ENCODE measurements at regions of chr19 and their contacts with region 1.

Region 1: GRCh38 chr19:29714953-29715700 is at the start of gene C19orf12:
- DNase-seq: peak; percentile 70
- ATAC-seq: peak; percentile 75
- H3K4me3 Mint-ChIP-seq: peak within 1 kb of the TSS; percentile 91
- H3K27ac Mint-ChIP-seq: peak within 1 kb of the TSS; percentile 95
- H3K4me1 Mint-ChIP-seq: peaks cover 50% of the 10 kb centered on the region
- H3K27me3 Mint-ChIP-seq: no peaks in the 10 kb centered on the region
- CTCF ChIP-seq: no peak
- total RNA-seq, gene C19orf12: 21.1 and 21.6 TPM in 2 replicates

Region 2: DNA sequence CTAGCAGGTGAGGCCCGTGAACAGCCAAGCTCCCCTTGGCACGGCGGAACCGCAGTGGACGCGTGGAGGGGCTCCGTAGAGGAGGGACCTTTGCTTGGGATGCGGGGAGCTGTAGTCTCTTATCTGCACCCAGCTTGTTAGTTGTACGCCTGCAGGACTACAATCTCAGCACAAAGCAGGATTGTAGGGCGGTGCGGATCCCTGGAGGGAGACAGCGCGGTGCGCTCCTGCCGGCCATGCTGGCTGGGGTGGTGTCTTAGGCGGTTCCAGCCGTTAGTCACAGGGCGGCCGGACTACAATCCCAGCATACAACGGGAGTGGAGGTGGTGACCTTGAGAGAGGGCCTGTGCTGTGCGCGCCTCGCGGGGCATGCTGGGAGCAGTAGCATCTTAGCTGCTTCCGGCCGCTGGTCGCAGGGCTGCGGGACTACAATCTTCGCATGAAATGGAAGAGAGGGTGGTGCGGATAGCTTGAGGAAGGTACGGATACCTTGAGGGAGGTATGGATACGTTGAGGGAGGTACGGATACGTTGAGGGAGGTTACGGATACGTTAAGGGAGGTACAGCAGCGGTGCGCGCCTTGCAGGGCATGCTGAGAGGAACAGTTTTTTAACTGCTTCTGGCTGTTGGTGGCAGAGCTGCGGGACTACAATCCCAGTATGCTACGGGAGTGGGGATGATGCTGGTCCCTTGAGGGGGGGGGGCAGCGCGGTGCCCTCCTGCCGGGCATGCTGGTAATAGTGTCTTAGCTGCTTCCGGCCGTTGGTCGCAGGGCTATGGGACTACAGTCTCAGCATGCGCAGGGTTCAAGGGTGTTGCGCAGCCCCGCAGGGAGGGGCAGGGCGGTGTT is 1921.3 kb before region 1 on chr19:
- CTCF ChIA-PET with region 1: interaction called, 3 read pairs
- POLR2A ChIA-PET with region 1: no interaction called
- intact Hi-C with region 1: loop called (anchors 5 kb)
- DNase-seq: peak; percentile 83
- ATAC-seq: peak; percentile 89
- H3K4me3 Mint-ChIP-seq: peak overlapping the region; percentile 95
- H3K27ac Mint-ChIP-seq: peak overlapping the region; percentile 93
- H3K4me1 Mint-ChIP-seq: peaks cover 35% of the 10 kb centered on the region
- H3K27me3 Mint-ChIP-seq: no peaks in the 10 kb centered on the region
- CTCF ChIP-seq: no peak

Region 3: DNA sequence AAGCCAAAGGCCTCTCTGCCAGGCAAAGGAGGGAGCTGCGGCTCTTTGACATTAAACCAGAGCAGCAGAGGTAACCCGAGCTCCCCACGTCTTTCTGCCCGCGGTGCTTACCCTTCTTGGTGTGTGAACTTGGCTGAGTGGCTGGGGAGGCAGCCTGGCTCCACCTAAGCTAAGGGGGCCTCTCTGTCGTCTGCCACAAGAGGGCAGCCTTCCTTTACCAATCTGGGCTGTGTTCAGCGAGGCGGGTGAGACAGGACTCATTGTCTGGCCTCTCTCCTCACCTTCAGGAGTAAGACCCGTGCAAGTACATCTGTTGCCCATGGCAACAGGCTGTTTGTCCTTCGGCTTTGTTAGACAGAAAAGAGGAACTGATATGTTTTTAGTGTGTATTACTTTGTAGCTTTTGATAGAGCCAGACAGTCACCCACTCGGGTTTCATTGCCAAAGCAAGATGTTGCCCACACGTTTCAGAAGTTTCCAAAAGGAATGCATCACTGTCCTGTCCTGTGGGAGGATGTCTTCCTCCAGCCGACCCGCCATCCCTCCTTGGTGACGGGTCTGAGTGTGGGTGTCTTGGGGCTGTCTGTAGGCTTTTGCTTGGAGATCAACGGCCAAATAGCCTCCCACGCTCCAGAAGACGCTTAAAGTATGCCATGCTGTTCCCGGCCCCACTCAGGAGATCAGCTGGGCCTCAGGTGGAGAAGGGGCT is 104.4 kb before region 1 on chr19:
- CTCF ChIA-PET with region 1: interaction called, 118 read pairs
- POLR2A ChIA-PET with region 1: interaction called, 101 read pairs
- intact Hi-C with region 1: loop called (anchors 1 kb)
- DNase-seq: peak; percentile 65
- ATAC-seq: peak; percentile 80
- H3K4me3 Mint-ChIP-seq: no peak overlapping the region
- H3K27ac Mint-ChIP-seq: peak overlapping the region; percentile 83
- H3K4me1 Mint-ChIP-seq: peaks cover 27% of the 10 kb centered on the region
- H3K27me3 Mint-ChIP-seq: no peaks in the 10 kb centered on the region
- CTCF ChIP-seq: peak; percentile 32

Region 4: GRCh38 chr19:29671393-29672160 is 43.5 kb before region 1 on chr19:
- CTCF ChIA-PET with region 1: interaction called, 26 read pairs
- POLR2A ChIA-PET with region 1: interaction called, 27 read pairs
- intact Hi-C with region 1: loop called (anchors 2 kb)
- DNase-seq: peak; percentile 42
- ATAC-seq: peak; percentile 79
- H3K4me3 Mint-ChIP-seq: peak overlapping the region; percentile 46
- H3K27ac Mint-ChIP-seq: peak overlapping the region; percentile 93
- H3K4me1 Mint-ChIP-seq: peaks cover 58% of the 10 kb centered on the region
- H3K27me3 Mint-ChIP-seq: no peaks in the 10 kb centered on the region
- CTCF ChIP-seq: no peak

Region 5: GRCh38 chr19:29735800-29736199 is 20.7 kb after region 1 on chr19:
- CTCF ChIA-PET with region 1: interaction called, 17 read pairs
- POLR2A ChIA-PET with region 1: no interaction called
- intact Hi-C with region 1: no loop called
- DNase-seq: no peak
- ATAC-seq: no peak
- H3K4me3 Mint-ChIP-seq: no peak overlapping the region
- H3K27ac Mint-ChIP-seq: no peak overlapping the region
- H3K4me1 Mint-ChIP-seq: no peaks in the 10 kb centered on the region
- H3K27me3 Mint-ChIP-seq: peaks cover 17% of the 10 kb centered on the region
- CTCF ChIP-seq: no peak

Region 6: DNA sequence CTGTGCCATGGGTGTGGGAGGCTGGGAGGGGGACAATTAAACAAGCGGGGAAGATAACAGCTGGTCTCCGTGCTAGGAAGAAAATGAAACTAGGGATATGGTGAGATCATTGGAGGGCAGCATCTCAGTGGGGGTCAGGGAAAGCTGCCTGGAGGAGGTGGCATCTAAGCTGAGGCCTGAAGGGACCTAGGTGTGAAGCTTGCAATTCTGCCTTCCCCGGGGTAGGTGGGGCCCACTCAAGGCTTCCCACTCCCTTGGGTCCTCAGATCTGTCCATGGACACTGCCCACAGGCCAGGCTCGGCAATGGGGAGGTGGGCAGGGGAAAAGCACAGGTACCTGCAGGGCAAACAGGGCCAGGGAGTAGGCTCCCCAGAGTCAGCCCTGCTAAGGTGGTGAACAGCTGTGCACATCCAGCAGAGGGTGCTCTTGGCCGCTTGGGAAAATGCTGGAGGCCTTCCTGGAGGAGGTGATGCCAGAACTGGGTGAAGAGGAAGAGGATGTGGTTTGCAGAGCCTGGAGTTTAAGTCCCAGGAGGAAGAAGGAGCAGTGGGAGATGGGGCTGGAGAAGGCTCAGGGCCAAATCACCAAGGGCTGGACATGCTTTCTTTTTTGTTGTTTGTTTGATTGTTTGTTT is 70.9 kb after region 1 on chr19:
- CTCF ChIA-PET with region 1: no interaction called
- POLR2A ChIA-PET with region 1: no interaction called
- intact Hi-C with region 1: no loop called
- DNase-seq: no peak
- ATAC-seq: no peak
- H3K4me3 Mint-ChIP-seq: no peak overlapping the region
- H3K27ac Mint-ChIP-seq: peak overlapping the region; percentile 53
- H3K4me1 Mint-ChIP-seq: no peaks in the 10 kb centered on the region
- H3K27me3 Mint-ChIP-seq: peaks cover 2% of the 10 kb centered on the region
- CTCF ChIP-seq: no peak

Region 7: GRCh38 chr19:29844891-29845572 is 129.9 kb after region 1 on chr19:
- CTCF ChIA-PET with region 1: no interaction called
- POLR2A ChIA-PET with region 1: interaction called, 5 read pairs
- intact Hi-C with region 1: loop called (anchors 1 kb)
- DNase-seq: peak; percentile 94
- ATAC-seq: peak; percentile 80
- H3K4me3 Mint-ChIP-seq: peak overlapping the region; percentile 86
- H3K27ac Mint-ChIP-seq: peak overlapping the region; percentile 68
- H3K4me1 Mint-ChIP-seq: peaks cover 12% of the 10 kb centered on the region
- H3K27me3 Mint-ChIP-seq: peaks cover 9% of the 10 kb centered on the region
- CTCF ChIP-seq: no peak

Region 8: DNA sequence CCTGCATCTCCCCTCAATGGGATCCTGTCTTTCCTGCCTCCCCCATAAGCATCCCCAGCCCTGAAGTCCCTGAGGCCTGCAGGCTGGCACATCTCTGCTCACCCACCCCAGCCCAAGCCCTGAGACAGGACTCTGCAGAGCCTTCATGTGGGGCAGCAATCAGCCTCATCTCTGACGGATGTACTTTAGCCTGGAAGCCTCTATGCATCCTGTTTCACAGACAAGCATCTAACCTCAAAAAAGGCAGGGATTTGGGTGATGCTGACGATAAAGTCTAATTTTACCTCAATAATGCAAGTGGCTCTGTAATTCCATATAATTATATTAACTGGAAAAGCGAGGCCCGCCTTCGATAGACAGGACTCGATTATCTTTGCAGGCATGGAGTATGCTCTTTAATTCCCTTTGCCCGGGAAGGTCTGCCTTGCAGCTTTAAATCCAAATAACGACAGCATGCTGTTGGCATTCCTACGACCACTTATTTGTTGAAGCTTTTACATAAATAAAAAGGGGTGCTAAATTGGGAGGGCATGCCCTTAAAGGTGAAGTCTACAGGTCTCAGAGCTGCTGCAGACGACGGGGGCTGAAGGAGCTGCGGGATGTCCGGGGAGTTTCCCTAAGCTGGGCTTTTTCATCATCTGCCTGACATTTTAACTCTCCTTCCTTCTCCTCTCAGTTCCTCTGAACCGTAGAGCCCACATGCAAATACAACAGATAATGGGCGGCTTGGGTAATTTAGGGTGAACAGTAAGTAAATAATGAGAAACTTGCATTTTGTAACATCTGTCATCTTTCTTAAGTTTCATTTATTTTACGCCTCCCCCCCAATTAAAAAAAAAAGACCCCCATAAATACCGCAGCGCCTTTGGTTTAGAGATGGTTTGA is 438.4 kb after region 1 on chr19:
- CTCF ChIA-PET with region 1: no interaction called
- POLR2A ChIA-PET with region 1: interaction called, 10 read pairs
- intact Hi-C with region 1: no loop called
- DNase-seq: no peak
- ATAC-seq: peak; percentile 94
- H3K4me3 Mint-ChIP-seq: peak overlapping the region; percentile 44
- H3K27ac Mint-ChIP-seq: no peak overlapping the region
- H3K4me1 Mint-ChIP-seq: peaks cover 20% of the 10 kb centered on the region
- H3K27me3 Mint-ChIP-seq: peaks cover 2% of the 10 kb centered on the region
- CTCF ChIP-seq: no peak